Activated CD4-positive, alpha-beta T cell treated with anti-CD3 and anti-CD28 coated beads, Interleukin-2, amount 10 ng/mL, durations not matched to agents 7 days and 5 days (primary cell): ENCODE measurements at regions of chr10 and their contacts with region 1.

Region 1: DNA sequence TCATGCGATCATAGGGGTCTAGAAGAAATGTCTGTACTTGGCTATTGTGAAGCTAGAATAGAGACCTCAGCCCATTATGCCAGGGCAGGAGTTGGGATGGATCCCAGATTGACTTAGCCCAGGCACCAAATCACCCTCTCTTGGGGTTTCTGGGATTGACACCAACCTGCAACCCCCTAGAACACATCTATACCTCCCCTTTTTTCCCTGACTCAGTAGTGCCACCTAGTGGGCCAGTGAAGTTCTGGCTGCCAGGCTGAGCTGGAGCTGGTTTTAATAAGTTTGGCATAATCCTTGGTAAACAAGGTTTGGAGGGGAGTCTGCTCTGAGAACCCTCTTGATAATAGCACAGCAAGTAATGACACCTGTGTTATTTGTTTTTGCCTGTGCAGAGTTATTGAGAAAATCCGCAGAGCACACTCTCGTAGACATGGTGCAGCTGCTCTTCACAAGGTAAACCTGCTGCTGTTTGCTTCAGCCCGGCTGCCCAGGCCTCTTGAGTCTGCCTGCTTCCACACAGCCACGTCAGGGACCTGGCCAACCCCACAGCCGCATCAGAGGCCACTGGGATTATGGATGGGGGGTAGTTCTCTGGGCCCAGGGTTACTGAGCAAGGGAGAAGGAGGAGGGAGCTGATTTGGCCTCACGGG is 43.3 kb upstream of the NFKB2 start:
- DNase-seq: peak; percentile 80
- H3K4me3 Mint-ChIP-seq: no peak overlapping the region
- H3K27ac Mint-ChIP-seq: no peak overlapping the region
- H3K4me1 Mint-ChIP-seq: no peaks in the 10 kb centered on the region
- H3K27me3 Mint-ChIP-seq: no peaks in the 10 kb centered on the region

Region 2: GRCh38 chr10:102235598-102235920 is 116.6 kb before region 1 on chr10:
- CTCF ChIA-PET with region 1: interaction called, 170 read pairs
- POLR2A ChIA-PET with region 1: interaction called, 4 read pairs
- DNase-seq: no peak
- H3K4me3 Mint-ChIP-seq: no peak overlapping the region
- H3K27ac Mint-ChIP-seq: no peak overlapping the region
- H3K4me1 Mint-ChIP-seq: peaks cover 4% of the 10 kb centered on the region
- H3K27me3 Mint-ChIP-seq: peaks cover 62% of the 10 kb centered on the region

Region 3: GRCh38 chr10:102368072-102368471 is 15.9 kb after region 1 on chr10:
- CTCF ChIA-PET with region 1: interaction called, 49 read pairs
- POLR2A ChIA-PET with region 1: no interaction called
- DNase-seq: no peak
- H3K4me3 Mint-ChIP-seq: no peak overlapping the region
- H3K27ac Mint-ChIP-seq: no peak overlapping the region
- H3K4me1 Mint-ChIP-seq: no peaks in the 10 kb centered on the region
- H3K27me3 Mint-ChIP-seq: no peaks in the 10 kb centered on the region

Region 4: GRCh38 chr10:102384053-102384452 is 31.9 kb after region 1 on chr10:
- CTCF ChIA-PET with region 1: interaction called, 15 read pairs
- POLR2A ChIA-PET with region 1: no interaction called
- DNase-seq: no peak
- H3K4me3 Mint-ChIP-seq: no peak overlapping the region
- H3K27ac Mint-ChIP-seq: no peak overlapping the region
- H3K4me1 Mint-ChIP-seq: no peaks in the 10 kb centered on the region
- H3K27me3 Mint-ChIP-seq: no peaks in the 10 kb centered on the region